Activated naive CD4-positive, alpha-beta T cell treated with anti-CD3 and anti-CD28 coated beads for 36 hours (primary cell): ENCODE measurements at regions of chr6 and their contacts with region 1.

Region 1: GRCh38 chr6:132300323-132300949 is 100.8 kb downstream of the MOXD1 start:
- DNase-seq: peak; percentile 43
- H3K4me3 Mint-ChIP-seq: no peak overlapping the region
- H3K27ac Mint-ChIP-seq: no peak overlapping the region
- H3K4me1 Mint-ChIP-seq: no peaks in the 10 kb centered on the region
- H3K27me3 Mint-ChIP-seq: peaks cover 26% of the 10 kb centered on the region

Region 2: DNA sequence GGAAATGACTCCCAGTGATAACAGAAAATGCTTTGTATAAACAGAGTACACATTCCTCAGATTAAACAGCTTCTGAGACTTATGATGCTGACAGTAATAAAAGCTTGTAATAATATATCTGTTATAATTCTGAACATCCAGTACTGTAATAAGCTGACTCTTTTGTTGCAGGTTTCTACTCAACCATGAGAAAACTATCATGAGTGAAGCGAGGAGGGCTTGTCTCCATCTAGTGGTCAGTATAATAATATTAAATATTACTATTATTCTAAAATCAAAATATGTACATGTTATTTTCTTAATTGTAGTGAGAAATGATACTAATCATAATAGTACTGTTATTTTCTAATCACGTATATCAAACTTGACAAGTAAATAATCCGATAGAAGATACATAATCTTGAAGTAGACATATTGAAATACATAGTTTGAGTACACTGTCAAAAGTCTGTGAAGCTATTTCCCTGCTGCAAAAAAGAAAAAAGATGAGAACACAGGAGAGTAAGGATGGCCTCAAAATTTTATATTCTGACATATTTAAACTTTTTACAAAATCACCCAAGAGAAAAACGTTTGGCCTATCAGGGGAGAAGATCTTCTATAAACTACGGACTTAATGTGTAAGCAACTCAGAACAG is 82.3 kb before region 1 on chr6:
- CTCF ChIA-PET with region 1: no interaction called
- intact Hi-C with region 1: no loop called
- DNase-seq: no peak
- H3K4me3 Mint-ChIP-seq: no peak overlapping the region
- H3K27ac Mint-ChIP-seq: no peak overlapping the region
- H3K4me1 Mint-ChIP-seq: no peaks in the 10 kb centered on the region
- H3K27me3 Mint-ChIP-seq: peaks cover 7% of the 10 kb centered on the region

Region 3: DNA sequence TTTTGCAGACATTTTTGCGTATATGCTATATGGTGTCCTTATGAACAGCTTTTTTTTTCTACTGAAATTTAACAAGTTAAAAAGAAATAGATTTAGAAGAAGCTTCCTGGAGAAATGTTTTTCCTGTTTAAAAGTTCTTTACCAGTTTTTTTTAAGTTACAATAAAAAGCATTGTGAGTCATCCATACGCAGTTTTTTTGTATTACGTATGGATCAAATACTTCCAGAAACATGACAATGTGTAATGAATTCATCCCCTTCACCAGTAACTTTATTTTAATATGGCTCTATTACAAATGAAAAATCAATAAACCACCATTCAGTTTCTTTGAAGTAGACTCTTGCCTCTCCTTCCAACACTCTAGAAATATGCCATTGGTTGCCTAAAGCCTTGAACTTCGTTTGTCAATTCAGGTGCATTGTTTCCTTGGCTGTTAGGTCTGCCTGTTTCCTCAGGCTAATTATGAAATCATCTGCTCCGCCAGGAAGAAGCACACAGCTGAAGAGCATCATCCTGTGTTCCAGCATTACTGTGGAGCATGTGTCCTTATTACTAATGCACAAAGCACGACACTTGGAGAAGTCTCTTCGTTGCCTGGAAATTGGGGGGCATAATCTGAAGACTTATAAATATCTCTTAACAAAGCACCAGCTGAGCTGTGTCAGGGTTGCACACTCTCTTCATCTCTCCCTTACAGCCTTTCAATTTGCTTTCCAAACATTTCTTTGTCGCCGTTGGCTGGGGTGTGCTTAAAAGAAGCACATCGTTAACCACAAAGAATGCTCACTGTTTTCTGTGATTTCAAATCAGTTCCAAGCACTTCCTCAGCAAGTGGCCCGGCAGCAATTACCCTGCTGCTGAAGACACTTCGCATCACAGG is 91.2 kb after region 1 on chr6:
- CTCF ChIA-PET with region 1: no interaction called
- intact Hi-C with region 1: loop called (anchors 2 kb)
- DNase-seq: no peak
- H3K4me3 Mint-ChIP-seq: no peak overlapping the region
- H3K27ac Mint-ChIP-seq: no peak overlapping the region
- H3K4me1 Mint-ChIP-seq: no peaks in the 10 kb centered on the region
- H3K27me3 Mint-ChIP-seq: peaks cover 35% of the 10 kb centered on the region

Region 4: GRCh38 chr6:132730560-132730959 is 430.1 kb after region 1 on chr6:
- CTCF ChIA-PET with region 1: no interaction called
- intact Hi-C with region 1: no loop called
- DNase-seq: no peak
- H3K4me3 Mint-ChIP-seq: no peak overlapping the region
- H3K27ac Mint-ChIP-seq: no peak overlapping the region
- H3K4me1 Mint-ChIP-seq: peaks cover 9% of the 10 kb centered on the region
- H3K27me3 Mint-ChIP-seq: no peaks in the 10 kb centered on the region